CD8-positive, alpha-beta memory T cell (primary cell): ENCODE measurements at regions of chr5 and their contacts with region 1.

Region 1: DNA sequence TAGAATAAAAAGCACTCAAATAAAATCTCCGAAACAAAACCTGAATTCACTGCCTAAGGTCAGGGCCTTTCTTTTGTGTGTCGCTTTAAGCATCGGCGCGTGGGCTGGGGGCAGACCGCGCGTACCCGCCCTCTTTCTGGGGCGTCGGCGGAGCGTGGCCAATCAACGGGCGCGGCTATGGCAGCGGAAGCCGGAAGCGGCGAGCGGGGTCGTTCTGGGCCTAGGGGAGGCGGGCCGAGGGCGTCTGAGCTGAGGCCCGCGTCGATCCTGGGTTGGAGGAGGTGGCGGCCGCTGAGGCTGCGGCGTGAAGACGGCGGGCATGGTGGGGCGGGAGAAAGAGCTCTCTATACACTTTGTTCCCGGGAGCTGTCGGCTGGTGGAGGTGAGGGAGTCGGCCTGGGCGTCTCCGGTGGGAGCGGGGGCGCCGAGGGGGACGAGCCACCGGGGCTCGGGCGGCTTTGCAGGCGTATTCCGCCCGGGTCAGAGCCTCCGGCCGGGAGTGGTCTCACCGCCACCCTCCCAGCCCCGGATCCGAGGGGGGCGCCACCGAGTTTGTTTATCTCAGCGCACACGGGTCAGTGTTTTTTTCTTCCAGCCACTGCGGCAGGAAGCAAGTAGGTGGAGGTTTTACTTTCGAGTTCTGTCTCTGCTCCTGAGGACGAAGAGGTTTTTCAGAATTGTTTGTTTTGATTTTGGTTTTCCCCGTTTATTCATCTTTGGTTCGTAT is at the start of gene MAT2B:
- DNase-seq: peak; percentile 94 to 97 (median 95)
- H3K4me3 ChIP-seq: peak within 1 kb of the TSS; percentile 61
- H3K4me3 Mint-ChIP-seq: peak within 1 kb of the TSS; percentile 95 to 99 (median 99)
- H3K27ac ChIP-seq: peak within 1 kb of the TSS; percentile 86
- H3K27ac Mint-ChIP-seq: peak within 1 kb of the TSS; percentile 98 to 100 (median 99)
- H3K4me1 ChIP-seq: peaks cover 39% of the 10 kb centered on the region
- H3K4me1 Mint-ChIP-seq: peaks cover 58 to 64% (median 62%) of the 10 kb centered on the region in 3 donors
- H3K27me3 ChIP-seq: no peaks in the 10 kb centered on the region
- H3K27me3 Mint-ChIP-seq: peaks cover 0 to 1% of the 10 kb centered on the region in 2 donors
- total RNA-seq, gene MAT2B: 101 to 102 TPM

Region 2: DNA sequence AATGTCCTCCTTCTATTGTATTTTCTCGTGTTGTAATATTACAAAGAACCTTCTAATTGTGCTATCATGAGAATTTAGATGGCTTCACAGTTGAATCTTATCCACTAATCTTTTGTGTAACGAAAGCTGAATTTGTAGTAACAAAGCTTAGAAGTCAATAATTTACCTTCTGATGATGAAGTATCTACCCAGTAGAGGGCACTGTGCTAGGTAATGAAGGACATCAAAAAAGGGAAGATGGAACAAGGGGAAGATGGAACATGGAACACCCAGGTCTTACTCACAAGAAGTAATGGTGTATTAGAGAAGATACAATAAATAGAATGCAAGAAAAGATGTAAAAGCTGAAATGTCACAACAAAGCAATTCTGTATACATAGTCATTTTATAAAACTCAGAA is 199.1 kb before region 1 on chr5:
- CTCF ChIA-PET with region 1: no interaction called
- POLR2A ChIA-PET with region 1: no interaction called
- DNase-seq: no peak
- H3K4me3 ChIP-seq: no peak overlapping the region
- H3K4me3 Mint-ChIP-seq: no peak overlapping the region
- H3K27ac ChIP-seq: no peak overlapping the region
- H3K27ac Mint-ChIP-seq: no peak overlapping the region
- H3K4me1 ChIP-seq: no peaks in the 10 kb centered on the region
- H3K4me1 Mint-ChIP-seq: no peaks in the 10 kb centered on the region
- H3K27me3 ChIP-seq: no peaks in the 10 kb centered on the region
- H3K27me3 Mint-ChIP-seq: peaks cover 0 to 3% of the 10 kb centered on the region in 2 donors

Region 3: DNA sequence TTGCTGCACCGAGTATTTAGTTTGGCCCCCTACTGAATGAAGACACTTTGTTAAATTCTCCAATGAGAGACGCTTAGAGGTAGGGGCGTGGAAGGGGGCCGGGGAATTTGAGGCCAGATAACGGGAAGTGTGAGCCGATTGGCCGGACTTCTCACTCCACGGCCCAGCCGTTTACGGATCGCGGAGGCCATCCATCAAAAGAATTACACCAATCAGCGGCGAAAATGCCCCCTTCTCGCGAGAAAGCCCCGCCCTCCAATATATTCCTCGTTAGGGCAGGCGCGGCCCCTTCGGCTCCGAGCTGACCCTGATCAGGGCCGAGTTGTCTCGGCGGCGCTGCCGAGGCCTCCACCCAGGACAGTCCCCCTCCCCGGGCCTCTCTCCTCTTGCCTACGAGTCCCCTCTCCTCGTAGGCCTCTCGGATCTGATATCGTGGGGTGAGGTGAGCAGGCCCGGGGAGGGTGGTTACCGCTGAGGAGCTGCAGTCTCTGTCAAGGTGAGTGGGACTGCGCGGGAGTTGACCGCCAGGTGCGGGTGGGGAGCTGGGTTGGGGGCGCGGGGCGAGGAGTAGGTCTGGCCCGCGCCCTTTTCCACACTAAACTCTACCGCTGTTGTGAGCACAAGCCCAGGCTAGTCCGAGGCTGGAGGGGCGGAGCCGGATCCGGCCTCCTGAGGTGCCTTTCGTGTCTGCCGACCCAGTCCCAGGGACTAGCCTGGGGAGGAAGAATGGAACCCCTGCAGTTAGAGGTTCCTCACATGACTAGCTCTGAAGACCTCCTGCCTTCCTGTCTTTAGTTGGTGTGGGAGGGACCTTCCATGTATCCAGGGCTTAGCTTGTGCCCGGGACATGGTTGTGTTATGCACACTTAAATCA is 68.0 kb before region 1 on chr5 and contains the start of gene CCNG1:
- CTCF ChIA-PET with region 1: interaction called, 4 read pairs
- POLR2A ChIA-PET with region 1: interaction called, 13 read pairs
- DNase-seq: peak; percentile 81 to 92 (median 87)
- H3K4me3 ChIP-seq: peak within 1 kb of the TSS; percentile 89
- H3K4me3 Mint-ChIP-seq: peak within 1 kb of the TSS; percentile 88 to 95 (median 94)
- H3K27ac ChIP-seq: peak within 1 kb of the TSS; percentile 88
- H3K27ac Mint-ChIP-seq: peak within 1 kb of the TSS; percentile 82 to 97 (median 95)
- H3K4me1 ChIP-seq: peaks cover 32% of the 10 kb centered on the region
- H3K4me1 Mint-ChIP-seq: peaks cover 42 to 55% (median 51%) of the 10 kb centered on the region in 3 donors
- H3K27me3 ChIP-seq: no peaks in the 10 kb centered on the region
- H3K27me3 Mint-ChIP-seq: no peaks in the 10 kb centered on the region
- total RNA-seq, gene CCNG1: 77.8 to 90.9 TPM

Region 4: GRCh38 chr5:163459922-163460766 is 45.4 kb before region 1 on chr5 and contains the starts of genes HMMR and NUDCD2:
- CTCF ChIA-PET with region 1: interaction called, 25 read pairs
- POLR2A ChIA-PET with region 1: interaction called, 101 read pairs
- DNase-seq: peak; percentile 92 to 98 (median 97)
- H3K4me3 ChIP-seq: peak within 1 kb of the TSS; percentile 99
- H3K4me3 Mint-ChIP-seq: peak within 1 kb of the TSS; percentile 92 to 98 (median 96)
- H3K27ac ChIP-seq: peak within 1 kb of the TSS; percentile 98
- H3K27ac Mint-ChIP-seq: peak within 1 kb of the TSS; percentile 96 to 100 (median 99)
- H3K4me1 ChIP-seq: peaks cover 30% of the 10 kb centered on the region
- H3K4me1 Mint-ChIP-seq: peaks cover 42 to 64% (median 61%) of the 10 kb centered on the region in 3 donors
- H3K27me3 ChIP-seq: no peaks in the 10 kb centered on the region
- H3K27me3 Mint-ChIP-seq: peaks cover 0 to 5% of the 10 kb centered on the region in 2 donors
- total RNA-seq, gene HMMR: 40.6 to 43.8 TPM
- total RNA-seq, gene NUDCD2: 31.3 to 36.2 TPM

Region 5: GRCh38 chr5:163473635-163474243 is 31.8 kb before region 1 on chr5:
- CTCF ChIA-PET with region 1: interaction called, 11 read pairs
- POLR2A ChIA-PET with region 1: interaction called, 4 read pairs
- DNase-seq: peak in 1 of 5 donors; percentile 31
- H3K4me3 ChIP-seq: no peak overlapping the region
- H3K4me3 Mint-ChIP-seq: no peak overlapping the region
- H3K27ac ChIP-seq: no peak overlapping the region
- H3K27ac Mint-ChIP-seq: no peak overlapping the region
- H3K4me1 ChIP-seq: no peaks in the 10 kb centered on the region
- H3K4me1 Mint-ChIP-seq: peaks cover 1 to 13% (median 12%) of the 10 kb centered on the region in 3 donors
- H3K27me3 ChIP-seq: no peaks in the 10 kb centered on the region
- H3K27me3 Mint-ChIP-seq: no peaks in the 10 kb centered on the region